Cardiac septum (tissue), 1 donor: ENCODE measurements at regions of chr4 and their contacts with region 1.

Region 1: DNA sequence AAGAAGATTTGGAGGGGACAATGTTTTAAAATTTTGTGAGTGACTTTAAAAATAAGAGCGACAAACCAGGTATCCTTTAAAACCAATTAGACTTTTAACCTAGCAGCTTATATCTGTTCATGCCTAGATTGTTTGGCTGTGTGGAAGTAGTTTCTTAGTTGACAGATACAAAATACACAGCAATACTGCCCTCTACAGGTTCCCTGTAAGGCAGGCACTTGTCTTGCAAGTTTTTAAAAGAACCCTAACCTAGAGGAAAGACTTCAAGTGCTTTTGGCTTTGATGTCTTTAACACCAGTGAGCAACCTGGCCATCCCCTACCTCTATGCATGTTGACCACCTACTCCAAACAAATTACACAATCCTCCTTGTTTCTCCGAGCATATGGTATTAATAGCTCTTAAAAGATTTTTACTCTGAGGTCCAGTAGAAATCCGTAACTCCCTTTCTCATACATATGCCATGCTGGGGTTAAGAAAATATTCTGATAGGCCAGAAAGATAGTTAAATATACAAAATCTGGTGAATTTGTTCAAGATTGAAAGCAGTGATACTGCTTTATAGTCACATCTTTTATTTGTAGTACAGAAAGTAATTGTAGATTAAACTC is 273.0 kb downstream of the ARHGAP24 start:
- DNase-seq: no peak

Region 2: DNA sequence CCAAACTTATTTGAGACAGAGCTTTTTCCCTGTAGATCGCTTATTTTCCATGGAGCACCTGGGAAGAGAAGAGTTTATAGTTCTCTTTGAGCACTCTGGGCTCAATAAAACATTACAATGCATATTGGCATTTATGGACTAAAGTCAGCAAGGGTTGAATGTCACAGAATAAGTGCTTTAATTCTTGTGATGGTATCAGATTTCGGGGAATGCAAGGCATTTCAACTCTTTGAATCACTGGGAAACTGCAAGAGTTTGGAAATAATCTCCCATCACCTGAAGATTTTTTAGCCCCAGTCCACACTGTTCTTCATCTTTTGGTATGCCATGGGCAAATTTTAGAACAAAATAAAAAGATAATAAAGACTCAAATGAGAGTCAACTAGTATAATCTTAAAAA is 670.0 kb before region 1 on chr4:
- intact Hi-C with region 1: loop called (anchors 5 kb)
- DNase-seq: no peak

Region 3: GRCh38 chr4:85147439-85148076 is 600.4 kb before region 1 on chr4:
- intact Hi-C with region 1: loop called (anchors 5 kb)
- DNase-seq: no peak